ENCODE measurements at regions of chr2 and their contacts with region 1.

Region 1: GRCh38 chr2:110157153-110157793 is 41.7 kb upstream of the MALL start:
- DNase-seq: no peak
- H3K4me3 ChIP-seq: no peak overlapping the region
- H3K27ac ChIP-seq: no peak overlapping the region
- H3K4me1 ChIP-seq: no peaks in the 10 kb centered on the region
- H3K27me3 ChIP-seq: peaks cover 0 to 1% (median 0%) of the 10 kb centered on the region in 4 experiments; a peak in 2 of 7 replicates
- CTCF ChIP-seq: peak in 2 of 3 experiments; percentile 69 to 75; a peak in 3 of 4 replicates
- EP300 ChIP-seq: no peak
- POLR2A ChIP-seq: no peak
- RAD21 ChIP-seq: peak; percentile 84 to 86

Region 2: DNA sequence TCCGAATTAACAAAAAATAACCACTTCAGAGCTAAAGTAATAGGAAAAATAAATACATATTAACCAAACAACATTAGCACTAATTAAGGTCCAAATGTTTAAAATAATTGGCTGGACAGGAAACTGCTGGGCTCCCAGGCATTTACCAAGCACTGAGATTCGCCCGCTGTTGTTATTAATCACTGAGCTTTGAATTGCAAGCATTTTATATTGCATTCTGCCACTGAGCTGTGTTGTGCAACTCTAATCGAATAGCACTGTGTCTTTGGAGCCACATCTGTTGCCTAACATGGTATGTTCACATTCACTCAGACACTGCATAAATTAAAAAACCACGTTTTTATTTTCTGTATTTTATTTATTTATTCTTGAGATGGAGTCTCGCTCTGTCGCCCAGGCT is 454.2 kb before region 1 on chr2:
- CTCF ChIA-PET with region 1: no interaction called
- POLR2A ChIA-PET with region 1: no interaction called
- DNase-seq: no peak
- H3K4me3 ChIP-seq: no peak overlapping the region
- H3K27ac ChIP-seq: no peak overlapping the region
- H3K4me1 ChIP-seq: peaks cover 3 to 11% (median 7%) of the 10 kb centered on the region in 4 experiments
- H3K27me3 ChIP-seq: no peaks in the 10 kb centered on the region
- CTCF ChIP-seq: no peak
- EP300 ChIP-seq: no peak
- POLR2A ChIP-seq: no peak
- RAD21 ChIP-seq: no peak

Region 3: GRCh38 chr2:110095994-110096633 is 61.2 kb before region 1 on chr2:
- CTCF ChIA-PET with region 1: no interaction called
- POLR2A ChIA-PET with region 1: no interaction called
- DNase-seq: no peak
- H3K4me3 ChIP-seq: no peak overlapping the region
- H3K27ac ChIP-seq: no peak overlapping the region
- H3K4me1 ChIP-seq: no peaks in the 10 kb centered on the region
- H3K27me3 ChIP-seq: no peaks in the 10 kb centered on the region
- CTCF ChIP-seq: no peak
- EP300 ChIP-seq: no peak
- POLR2A ChIP-seq: no peak
- RAD21 ChIP-seq: no peak

Region 4: DNA sequence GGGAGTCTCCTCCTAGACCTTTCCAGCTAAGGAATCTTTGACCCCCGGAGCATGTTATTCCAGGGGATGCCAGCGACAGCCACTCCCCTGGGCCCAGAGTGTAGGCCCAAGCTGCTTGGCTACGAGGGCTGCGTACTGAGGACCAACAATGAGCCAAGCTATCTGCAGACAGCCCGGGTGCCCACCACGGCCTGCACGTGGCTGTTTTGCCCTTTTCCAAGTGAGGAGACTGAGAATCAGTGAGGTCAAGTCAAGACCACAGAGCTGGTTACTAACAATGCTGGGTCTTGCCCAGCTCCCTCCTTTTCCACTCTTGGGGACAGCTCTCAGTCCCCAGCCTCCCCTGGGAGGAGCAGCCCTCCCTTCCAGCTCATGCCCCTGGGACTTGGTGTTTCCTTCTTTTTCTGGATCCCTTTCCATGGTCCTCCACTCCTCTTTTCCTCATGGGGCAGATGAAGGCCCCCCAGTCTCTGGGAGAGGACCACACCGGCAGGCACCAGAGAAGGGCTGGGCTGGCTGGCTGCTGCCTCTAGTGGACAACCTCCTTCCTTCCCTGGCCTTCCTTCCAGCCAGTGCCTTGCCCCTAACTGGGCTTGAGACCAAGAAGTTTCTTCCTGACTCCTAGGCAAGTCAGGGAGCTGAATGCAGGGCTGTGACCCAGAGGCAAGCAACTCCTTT is 41.1 kb before region 1 on chr2:
- CTCF ChIA-PET with region 1: interaction called, 13 read pairs
- POLR2A ChIA-PET with region 1: no interaction called
- DNase-seq: peak in 1 of 2 experiments; percentile 63
- H3K4me3 ChIP-seq: peak overlapping the region; percentile 31 to 60 (median 40); a peak in 6 of 8 replicates
- H3K27ac ChIP-seq: no peak overlapping the region
- H3K4me1 ChIP-seq: peaks cover 0 to 5% (median 2%) of the 10 kb centered on the region in 4 experiments; a peak in 4 of 7 replicates
- H3K27me3 ChIP-seq: peaks cover 0 to 29% (median 22%) of the 10 kb centered on the region in 4 experiments; a peak in 6 of 7 replicates
- CTCF ChIP-seq: peak; percentile 42 to 87 (median 80)
- EP300 ChIP-seq: no peak
- POLR2A ChIP-seq: no peak
- RAD21 ChIP-seq: peak; percentile 32 to 49; a peak in 3 of 4 replicates

Region 5: DNA sequence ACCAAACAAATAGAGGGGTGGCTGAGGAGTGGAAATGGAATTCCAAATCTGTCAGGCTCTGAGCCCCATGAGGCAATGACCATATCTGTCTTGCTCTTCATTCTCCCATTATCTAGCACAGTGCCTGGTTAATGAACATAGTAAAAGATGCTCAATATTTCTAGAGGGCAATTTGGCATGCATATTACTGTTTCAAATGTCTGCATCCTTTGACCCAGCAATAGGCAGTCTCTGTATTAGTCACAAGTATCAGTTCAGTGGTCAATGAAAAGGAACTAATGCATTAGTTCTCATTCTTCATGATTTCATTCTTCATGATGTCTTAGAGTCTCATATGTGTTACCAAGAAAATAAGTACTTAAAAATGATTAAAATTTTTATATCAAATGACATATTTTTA is 13.3 kb before region 1 on chr2:
- CTCF ChIA-PET with region 1: interaction called, 22 read pairs
- POLR2A ChIA-PET with region 1: no interaction called
- DNase-seq: no peak
- H3K4me3 ChIP-seq: no peak overlapping the region
- H3K27ac ChIP-seq: no peak overlapping the region
- H3K4me1 ChIP-seq: no peaks in the 10 kb centered on the region
- H3K27me3 ChIP-seq: no peaks in the 10 kb centered on the region
- CTCF ChIP-seq: no peak
- EP300 ChIP-seq: no peak
- POLR2A ChIP-seq: no peak
- RAD21 ChIP-seq: no peak

Region 6: DNA sequence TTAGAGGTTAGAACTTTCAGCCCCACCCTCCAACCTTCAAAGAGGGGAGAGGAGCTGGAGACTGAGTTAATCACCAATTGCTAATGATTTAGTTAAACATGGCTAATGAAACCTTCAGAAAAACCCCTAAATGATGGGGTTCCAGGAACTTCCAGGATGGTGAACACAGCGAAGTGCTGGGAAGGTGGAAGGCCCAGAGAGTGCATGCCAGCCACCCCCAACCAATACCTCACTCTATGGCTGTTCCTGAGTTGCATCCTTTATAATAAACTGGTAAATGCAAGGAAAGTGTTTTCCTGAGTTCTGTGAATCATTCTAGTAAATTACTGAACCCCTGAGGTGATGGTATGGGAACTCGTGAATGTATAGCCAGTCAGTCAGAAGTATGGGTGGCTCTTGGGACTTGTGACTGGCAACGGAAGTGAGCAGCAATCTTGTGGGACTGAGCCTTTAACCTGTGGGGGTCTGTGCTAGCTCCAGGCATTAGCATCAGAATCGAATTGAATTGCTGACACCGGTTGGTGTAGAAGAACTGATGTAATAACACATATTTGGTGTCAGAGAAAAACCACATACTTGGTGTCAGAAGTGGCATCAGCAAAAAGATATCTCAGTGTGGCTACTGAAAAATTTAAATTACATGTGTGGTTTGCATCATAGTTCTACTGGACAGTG is 10.2 kb after region 1 on chr2:
- CTCF ChIA-PET with region 1: interaction called, 30 read pairs
- POLR2A ChIA-PET with region 1: no interaction called
- DNase-seq: peak in 1 of 2 experiments; percentile 27
- H3K4me3 ChIP-seq: peak overlapping the region in 2 of 4 experiments; percentile 0 to 9; a peak in 2 of 8 replicates
- H3K27ac ChIP-seq: no peak overlapping the region
- H3K4me1 ChIP-seq: peaks cover 3 to 13% (median 7%) of the 10 kb centered on the region in 4 experiments; a peak in 6 of 7 replicates
- H3K27me3 ChIP-seq: no peaks in the 10 kb centered on the region; a peak in 1 of 7 replicates
- CTCF ChIP-seq: no peak
- EP300 ChIP-seq: no peak
- POLR2A ChIP-seq: no peak
- RAD21 ChIP-seq: no peak